ENCODE measurements at regions of chr1 and their contacts with region 1.

Region 1: DNA sequence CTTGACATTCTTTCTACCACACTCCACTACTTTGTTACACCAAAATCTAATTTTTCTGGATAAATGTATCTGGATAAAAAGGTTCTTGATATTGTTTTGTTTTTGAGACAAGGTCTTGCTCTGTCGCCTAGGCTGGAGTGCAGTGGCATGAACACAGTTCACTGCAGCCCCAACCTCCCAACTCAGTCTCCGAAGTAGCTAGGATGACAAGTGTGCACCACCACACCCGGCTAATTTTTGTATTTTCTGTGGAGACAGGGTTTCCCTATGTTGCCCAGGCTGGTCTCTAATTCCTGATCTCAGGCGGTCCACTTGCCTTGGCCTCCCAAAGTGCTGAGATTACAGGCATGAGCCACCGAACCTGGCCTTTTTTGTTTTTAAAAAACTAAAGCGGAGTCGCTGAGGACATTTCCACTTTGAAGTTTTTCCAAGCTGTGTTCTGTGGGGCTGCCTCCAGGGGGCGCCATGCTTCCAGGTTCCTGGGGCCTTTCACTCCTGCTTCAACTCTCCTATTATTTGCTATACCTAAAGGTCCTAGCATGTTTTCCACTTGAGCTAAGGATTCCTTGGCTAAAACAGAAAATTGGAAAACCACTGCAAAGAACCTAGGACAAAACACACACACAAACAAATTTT is 14.1 kb upstream of the NCMAP start:
- DNase-seq: peak; percentile 64
- H3K4me3 Mint-ChIP-seq: peak overlapping the region; percentile 6
- H3K27ac Mint-ChIP-seq: peak overlapping the region; percentile 92
- H3K4me1 Mint-ChIP-seq: peaks cover 73% of the 10 kb centered on the region
- H3K27me3 Mint-ChIP-seq: no peaks in the 10 kb centered on the region

Region 2: DNA sequence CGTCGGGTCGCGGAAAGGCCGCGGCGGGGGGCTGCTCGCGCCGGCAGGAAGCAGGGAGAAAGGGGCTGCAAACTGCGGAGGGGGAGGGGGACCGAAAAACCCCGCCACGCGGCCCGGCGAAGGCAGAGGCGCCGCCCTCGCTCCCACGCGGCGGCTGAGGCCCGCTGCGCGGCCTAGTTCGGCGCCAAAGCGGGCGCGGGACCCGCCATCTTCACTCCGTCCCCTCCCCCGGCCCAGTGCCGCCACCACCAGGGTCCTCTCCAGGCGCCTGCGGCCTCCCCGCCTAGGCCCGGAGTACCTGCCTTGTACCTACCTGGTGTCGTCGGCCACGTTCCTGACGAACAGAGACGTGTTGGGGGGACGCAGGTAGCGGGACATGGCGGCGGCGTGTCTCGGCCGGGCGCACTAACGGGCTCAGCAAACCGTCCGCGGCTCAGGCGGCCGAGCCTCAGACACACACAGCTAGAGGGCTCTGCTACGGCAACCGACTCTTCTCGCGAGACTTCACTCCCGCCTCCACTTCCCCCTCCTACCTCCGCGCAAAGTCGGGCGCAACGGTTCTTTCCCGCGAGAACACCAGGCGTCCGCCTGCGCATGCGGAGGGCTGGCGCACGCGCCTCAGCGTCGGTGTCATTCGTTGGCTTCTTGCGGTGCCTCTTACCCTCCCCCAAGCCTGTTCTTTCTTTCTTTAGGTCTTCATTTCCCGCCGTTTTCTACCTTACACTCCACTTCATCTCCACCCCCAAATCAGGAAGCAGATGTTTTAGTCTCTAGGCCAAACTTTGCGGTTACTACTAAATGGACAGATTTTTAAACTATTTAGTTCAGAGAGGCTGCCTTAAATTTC is 561.7 kb before region 1 on chr1 and contains the start of gene SRSF10:
- CTCF ChIA-PET with region 1: no interaction called
- intact Hi-C with region 1: loop called (anchors 5 kb)
- DNase-seq: peak; percentile 99
- H3K4me3 Mint-ChIP-seq: peak within 1 kb of the TSS; percentile 94
- H3K27ac Mint-ChIP-seq: peak within 1 kb of the TSS; percentile 99
- H3K4me1 Mint-ChIP-seq: peaks cover 31% of the 10 kb centered on the region
- H3K27me3 Mint-ChIP-seq: no peaks in the 10 kb centered on the region
- total RNA-seq, gene SRSF10: 169 to 178 TPM

Region 3: DNA sequence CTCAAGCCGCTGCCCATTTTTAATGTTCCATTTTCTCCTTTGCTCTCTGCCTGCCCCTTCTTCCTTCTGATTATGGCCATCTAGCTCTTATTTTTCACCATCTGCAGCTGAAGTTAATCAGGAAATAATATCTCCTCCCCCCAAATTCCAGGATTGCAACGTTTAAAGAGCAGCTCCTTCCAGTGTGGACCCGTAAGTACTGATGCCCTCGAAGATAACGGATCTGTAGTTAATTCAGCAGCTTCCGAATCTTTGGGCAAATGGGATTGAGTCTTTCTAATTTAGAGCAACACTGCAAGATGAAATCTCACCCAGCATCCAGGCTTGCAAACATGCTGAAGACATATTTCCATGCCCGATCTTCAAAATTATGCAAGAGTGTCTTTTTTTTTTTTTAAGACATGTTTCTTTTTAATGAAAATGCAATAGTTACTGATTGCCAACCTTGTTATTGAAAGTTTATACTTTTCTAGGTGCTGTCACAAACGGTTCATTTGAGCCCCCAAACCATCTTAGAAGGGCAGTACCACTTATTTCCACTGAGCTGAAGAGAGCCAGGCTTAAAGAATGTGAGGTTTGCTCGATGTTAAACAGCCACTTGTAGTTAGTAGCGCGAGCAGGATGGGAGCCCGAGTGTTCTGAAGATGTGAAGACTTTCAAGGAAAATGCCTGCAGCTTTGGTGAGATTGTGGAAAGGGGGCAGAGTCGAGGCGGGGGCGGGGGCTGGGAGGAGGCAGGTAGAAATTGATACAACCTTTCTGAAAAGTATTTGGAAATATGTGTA is 50.1 kb before region 1 on chr1:
- CTCF ChIA-PET with region 1: interaction called, 5 read pairs
- intact Hi-C with region 1: loop called (anchors 1 kb)
- DNase-seq: no peak
- H3K4me3 Mint-ChIP-seq: no peak overlapping the region
- H3K27ac Mint-ChIP-seq: no peak overlapping the region
- H3K4me1 Mint-ChIP-seq: peaks cover 50% of the 10 kb centered on the region
- H3K27me3 Mint-ChIP-seq: no peaks in the 10 kb centered on the region

Region 4: DNA sequence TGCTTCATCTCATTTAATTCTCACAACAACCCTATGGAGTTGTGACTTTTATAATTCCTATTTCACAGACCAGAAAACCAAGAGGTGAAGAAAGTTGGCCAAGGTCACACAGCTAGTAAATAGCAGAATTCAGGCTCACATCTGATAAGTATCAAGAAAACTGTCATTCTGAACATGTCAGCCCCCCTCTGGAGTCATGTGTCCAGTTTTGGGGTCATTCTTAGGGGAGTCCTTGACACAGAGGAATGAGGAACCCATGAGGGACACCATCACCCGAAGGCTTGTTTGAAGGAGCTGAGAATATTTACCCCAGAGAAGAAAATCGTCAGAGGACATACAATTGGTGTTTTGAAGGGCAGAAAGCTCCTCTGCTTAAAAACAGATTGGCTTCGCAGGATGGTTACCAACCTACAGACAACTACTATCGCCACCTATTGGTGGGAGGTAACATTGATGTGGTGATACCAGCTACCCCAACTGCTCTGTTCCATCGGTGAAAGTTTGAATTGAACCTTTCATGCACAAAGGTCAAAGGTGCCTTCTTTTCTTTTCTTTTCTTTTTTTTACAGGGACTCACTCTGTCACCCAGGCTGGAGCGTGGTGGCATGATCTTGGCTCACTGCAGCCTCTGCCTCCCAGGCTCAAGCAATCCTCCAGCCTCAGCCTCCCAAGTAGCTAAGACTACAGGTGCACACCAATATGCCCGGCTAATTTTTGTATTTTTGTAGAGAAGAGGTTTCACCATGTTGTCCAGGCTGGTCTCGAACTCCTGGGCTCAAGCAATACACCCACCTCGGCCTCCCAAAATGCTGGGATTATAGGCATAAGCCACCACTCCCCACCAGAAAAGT is 45.4 kb after region 1 on chr1:
- CTCF ChIA-PET with region 1: interaction called, 22 read pairs
- intact Hi-C with region 1: loop called (anchors 1 kb)
- DNase-seq: peak; percentile 71
- H3K4me3 Mint-ChIP-seq: peak overlapping the region; percentile 24
- H3K27ac Mint-ChIP-seq: peak overlapping the region; percentile 72
- H3K4me1 Mint-ChIP-seq: peaks cover 5% of the 10 kb centered on the region
- H3K27me3 Mint-ChIP-seq: no peaks in the 10 kb centered on the region

Region 5: DNA sequence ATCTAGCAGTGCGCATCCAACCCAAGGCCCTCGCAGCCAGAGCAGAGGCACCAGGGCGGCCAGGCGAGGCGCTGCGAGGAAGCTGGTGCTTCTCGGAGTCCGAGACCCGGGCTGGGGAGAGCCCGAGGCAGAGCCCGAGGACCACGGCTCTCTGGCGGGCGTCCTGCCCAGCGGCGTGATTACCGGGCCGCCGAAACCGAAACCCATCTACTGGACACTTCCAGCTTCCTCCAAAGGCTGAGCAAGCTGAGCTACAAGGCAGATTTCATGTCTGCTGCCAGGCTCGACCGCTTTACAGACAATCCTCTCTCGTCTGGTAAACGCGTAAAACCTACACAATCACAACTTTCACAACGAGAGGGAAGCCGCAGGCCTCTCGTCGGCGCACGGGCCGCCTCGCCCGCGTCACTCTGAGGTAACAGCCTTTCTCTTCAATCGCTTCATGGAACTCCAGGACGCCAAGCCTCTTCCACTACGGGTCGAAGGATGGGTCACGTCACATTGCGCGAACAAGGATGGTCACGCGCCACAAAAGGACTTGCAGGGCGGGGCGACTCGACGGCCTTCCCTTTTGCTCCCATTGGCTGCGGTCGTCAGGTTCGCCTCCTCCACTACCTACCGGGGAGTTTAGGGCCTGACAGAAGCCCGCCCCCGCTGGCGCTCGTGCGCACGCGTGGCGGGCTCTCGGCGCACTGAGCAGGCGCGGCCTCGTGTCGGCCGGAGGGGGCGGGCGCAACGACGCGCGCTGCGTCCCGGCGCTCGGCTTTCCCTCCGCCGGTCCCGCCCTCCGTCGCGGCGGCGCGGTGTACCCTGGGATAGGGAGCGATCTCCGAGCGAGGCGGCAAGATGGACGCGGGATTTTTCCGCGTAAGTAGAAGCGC is 100.9 kb after region 1 on chr1 and contains the start of gene SRRM1:
- CTCF ChIA-PET with region 1: interaction called, 3 read pairs
- intact Hi-C with region 1: loop called (anchors 2 kb)
- DNase-seq: peak; percentile 100
- H3K4me3 Mint-ChIP-seq: peak within 1 kb of the TSS; percentile 83
- H3K27ac Mint-ChIP-seq: peak within 1 kb of the TSS; percentile 98
- H3K4me1 Mint-ChIP-seq: peaks cover 48% of the 10 kb centered on the region
- H3K27me3 Mint-ChIP-seq: no peaks in the 10 kb centered on the region
- total RNA-seq, gene SRRM1: 226 to 235 TPM

Measured in activated naive CD4-positive, alpha-beta T cell treated with anti-CD3 and anti-CD28 coated beads for 36 hours (primary cell).